Activated T-helper 1 cell treated with anti-CD3 and anti-CD28 coated beads, Interleukin-12 subunit alpha, Interleukin-12 subunit beta, Interleukin-2, Interleukin-4 antibody, amounts not matched to agents 30 ng/mL and 10 ng/mL and 1 ng/mL, durations not matched to agents 14 hours and 24 hours and 36 hours (primary cell): ENCODE measurements at regions of chr2 and their contacts with region 1.

Region 1: DNA sequence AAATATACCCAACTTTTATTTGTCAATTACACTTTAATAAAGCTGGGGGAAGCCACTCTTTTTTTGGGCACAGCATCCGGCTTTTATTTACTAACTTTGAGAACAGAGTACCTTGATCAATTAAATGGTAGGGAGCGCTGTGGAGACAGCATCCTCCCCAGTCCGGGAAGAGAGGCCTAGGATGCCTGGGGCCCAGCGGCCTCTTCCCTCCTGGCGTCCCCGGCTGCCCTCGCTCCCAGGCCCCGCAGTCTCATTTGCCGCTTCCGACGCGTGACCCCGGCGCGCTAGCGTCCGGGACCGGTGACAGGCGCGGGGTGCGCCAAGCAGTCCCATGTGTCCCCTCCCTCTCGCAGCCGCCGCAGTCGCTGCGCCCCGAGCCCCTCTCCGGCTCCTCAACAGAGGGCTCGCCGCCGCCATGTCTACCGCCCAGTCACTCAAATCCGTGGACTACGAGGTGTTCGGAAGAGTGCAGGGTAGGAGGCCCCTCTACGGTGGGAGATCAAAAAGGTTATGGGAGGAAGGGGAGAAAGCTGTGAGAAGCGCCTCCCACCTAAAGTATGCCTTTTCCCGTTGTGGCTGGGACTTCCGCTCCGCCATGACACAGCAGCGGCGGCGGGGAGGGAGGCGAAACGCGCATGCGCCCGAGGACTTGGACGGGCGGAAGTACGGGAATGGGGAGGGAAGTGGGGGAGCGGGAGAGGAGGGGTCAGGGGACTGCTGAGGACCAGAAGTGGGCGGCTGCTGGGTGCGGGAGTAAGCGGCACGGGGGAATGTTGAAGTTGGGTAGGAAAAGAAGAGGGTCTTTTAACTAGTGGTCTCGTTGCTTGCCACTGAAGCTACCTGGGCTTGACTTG is at the start of gene ACYP2:
- DNase-seq: peak; percentile 88
- H3K4me3 Mint-ChIP-seq: peak within 1 kb of the TSS; percentile 92
- H3K27ac Mint-ChIP-seq: peak within 1 kb of the TSS; percentile 97
- H3K4me1 Mint-ChIP-seq: peaks cover 14% of the 10 kb centered on the region
- H3K27me3 Mint-ChIP-seq: peaks cover 7% of the 10 kb centered on the region
- total RNA-seq, gene ACYP2: 5.2 and 5.9 TPM in 2 replicates

Region 2: GRCh38 chr2:53767405-53768241 is 347.9 kb before region 1 on chr2 and contains the start of gene CHAC2:
- intact Hi-C with region 1: loop called (anchors 5 kb)
- DNase-seq: peak; percentile 82
- H3K4me3 Mint-ChIP-seq: peak within 1 kb of the TSS; percentile 96
- H3K27ac Mint-ChIP-seq: peak within 1 kb of the TSS; percentile 97
- H3K4me1 Mint-ChIP-seq: peaks cover 38% of the 10 kb centered on the region
- H3K27me3 Mint-ChIP-seq: no peaks in the 10 kb centered on the region
- total RNA-seq, gene CHAC2: 24.1 and 25.6 TPM in 2 replicates

Region 3: GRCh38 chr2:54041135-54041534 is 74.4 kb before region 1 on chr2:
- intact Hi-C with region 1: loop called (anchors 2 kb)
- DNase-seq: peak; percentile 4
- H3K4me3 Mint-ChIP-seq: no peak overlapping the region
- H3K27ac Mint-ChIP-seq: no peak overlapping the region
- H3K4me1 Mint-ChIP-seq: no peaks in the 10 kb centered on the region
- H3K27me3 Mint-ChIP-seq: peaks cover 2% of the 10 kb centered on the region

Region 4: DNA sequence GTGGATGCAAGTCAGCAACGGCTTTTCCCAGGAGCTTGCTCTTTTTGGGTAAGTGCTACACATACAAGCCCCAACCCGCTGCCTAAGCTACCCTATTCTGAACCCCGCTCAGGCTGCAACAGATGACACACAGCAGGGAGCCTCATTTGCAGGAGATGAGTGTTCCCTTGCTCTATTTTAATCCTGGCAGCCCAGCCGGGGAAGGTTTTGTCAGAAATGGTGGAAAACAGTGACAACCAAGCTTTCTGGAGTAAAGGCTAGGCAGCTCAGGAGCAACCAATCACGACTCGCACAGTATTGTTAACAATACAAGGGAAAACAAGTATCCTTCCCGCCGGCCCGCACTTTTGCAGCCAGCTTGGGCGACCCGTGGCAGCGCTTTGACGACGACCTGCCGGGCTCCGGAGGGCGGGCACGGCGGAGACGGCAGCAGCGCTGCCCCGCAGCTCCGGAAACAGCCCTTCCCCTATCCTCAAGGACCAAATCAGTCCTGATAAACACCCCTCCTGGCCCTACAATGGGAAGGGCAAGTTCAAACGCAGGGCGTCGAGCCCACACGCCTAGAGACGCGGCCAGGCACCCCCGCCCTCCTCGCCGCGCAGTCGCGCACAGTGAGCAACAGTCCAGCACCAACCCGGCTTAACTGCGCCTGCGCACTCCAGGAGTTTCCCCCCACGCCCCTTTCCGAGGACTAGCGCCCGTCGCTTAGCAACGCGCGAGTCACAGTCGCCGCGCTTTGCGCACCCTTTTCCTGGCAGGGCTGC is 214.8 kb after region 1 on chr2:
- intact Hi-C with region 1: loop called (anchors 5 kb)
- DNase-seq: peak; percentile 86
- H3K4me3 Mint-ChIP-seq: peak overlapping the region; percentile 81
- H3K27ac Mint-ChIP-seq: peak overlapping the region; percentile 69
- H3K4me1 Mint-ChIP-seq: peaks cover 17% of the 10 kb centered on the region
- H3K27me3 Mint-ChIP-seq: peaks cover 19% of the 10 kb centered on the region

Region 5: DNA sequence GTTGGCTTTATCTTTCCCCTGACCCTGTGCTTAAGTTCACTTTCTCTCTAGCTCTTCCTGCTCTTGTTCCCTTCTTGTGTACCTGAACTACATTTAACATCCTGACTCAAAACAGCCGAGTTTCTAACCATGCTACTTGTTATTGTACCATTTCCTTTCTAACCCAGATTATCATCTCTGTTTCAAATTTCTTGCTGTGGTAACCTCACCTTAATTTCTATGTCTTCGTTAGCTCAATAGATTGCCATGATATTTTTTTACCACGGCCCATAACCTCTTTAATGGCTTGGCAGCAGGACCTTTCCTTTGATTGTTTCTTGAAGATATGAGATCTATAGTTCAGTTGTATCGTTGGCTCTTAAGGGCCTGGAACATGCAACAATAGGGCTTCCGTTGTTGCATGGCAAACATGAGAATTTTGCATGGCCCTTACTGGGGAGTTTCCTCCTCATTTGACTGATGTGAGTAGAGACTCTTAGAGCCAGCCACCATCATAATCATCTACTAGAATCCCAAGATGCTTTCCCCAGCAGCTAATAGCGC is 1415.1 kb after region 1 on chr2:
- intact Hi-C with region 1: loop called (anchors 10 kb)
- DNase-seq: no peak
- H3K4me3 Mint-ChIP-seq: peak overlapping the region; percentile 4
- H3K27ac Mint-ChIP-seq: peak overlapping the region; percentile 85
- H3K4me1 Mint-ChIP-seq: peaks cover 18% of the 10 kb centered on the region
- H3K27me3 Mint-ChIP-seq: no peaks in the 10 kb centered on the region